ENCODE measurements at regions of chr9 and their contacts with region 1.

Region 1: DNA sequence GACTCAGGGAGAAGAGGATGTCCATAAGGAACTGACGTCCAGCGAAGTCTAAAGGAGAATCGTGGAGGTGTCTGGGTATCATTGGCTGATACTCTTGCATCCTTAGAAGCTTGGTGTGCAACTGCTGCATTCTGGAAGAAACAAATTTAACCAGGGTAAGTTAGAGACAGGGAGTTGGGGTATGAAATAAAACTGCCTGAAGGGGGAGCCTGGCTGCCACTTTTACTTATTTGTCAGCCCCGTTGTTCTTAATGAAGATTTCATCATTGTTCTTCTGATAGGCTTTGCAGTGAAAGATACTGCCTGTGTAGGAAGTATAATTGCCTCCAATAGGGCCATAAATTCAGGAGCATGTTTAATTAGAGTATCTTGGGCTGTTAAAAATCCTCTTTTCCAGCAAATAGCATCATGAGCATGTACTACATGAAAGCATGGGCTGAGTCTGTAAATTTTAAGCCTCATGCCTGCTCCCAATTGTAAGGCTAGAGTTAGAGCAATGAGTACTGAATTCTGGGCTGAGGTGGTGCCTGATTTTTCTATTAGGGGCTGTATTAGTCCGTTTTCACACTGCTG is 1264.5 kb upstream of the ACO1 start:
- DNase-seq: peak; percentile 75
- H3K4me3 Mint-ChIP-seq: no peak overlapping the region
- H3K27ac Mint-ChIP-seq: no peak overlapping the region
- H3K4me1 Mint-ChIP-seq: no peaks in the 10 kb centered on the region
- H3K27me3 Mint-ChIP-seq: no peaks in the 10 kb centered on the region

Region 2: DNA sequence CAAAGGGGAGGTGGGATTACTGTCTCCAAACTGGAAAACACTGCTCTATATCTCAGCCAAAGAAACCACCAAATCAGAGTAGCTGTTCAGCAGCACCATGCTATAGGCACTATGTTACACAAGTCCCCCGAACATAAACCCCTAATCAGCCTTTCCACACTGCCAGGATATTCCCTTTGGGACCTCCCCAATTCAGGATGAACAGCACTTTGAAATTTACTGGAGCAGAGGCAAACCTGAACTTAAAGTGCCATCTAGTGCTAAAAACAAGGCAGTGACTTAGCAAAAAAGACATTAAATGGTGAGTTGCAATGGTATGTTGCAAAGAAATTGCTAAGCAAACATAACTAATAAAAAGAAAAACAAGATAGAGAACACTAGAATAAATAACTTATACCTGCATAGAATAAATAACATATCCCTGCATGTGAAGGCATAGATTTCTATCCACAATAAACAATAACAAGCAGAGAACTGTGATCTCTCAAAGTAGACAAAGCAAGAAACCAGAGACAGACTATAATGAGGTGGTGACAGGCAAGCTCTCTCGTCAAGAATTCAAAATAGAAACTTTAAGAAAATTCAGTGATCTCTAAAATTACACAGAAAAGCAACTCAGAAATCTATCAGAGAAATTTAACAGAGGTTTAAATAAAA is 680.1 kb after region 1 on chr9:
- intact Hi-C with region 1: loop called (anchors 2 kb)
- DNase-seq: no peak
- H3K4me3 Mint-ChIP-seq: no peak overlapping the region
- H3K27ac Mint-ChIP-seq: no peak overlapping the region
- H3K4me1 Mint-ChIP-seq: no peaks in the 10 kb centered on the region
- H3K27me3 Mint-ChIP-seq: no peaks in the 10 kb centered on the region

Region 3: GRCh38 chr9:32251539-32251938 is 1131.6 kb after region 1 on chr9:
- intact Hi-C with region 1: loop called (anchors 2 kb)
- DNase-seq: peak; percentile 74
- H3K4me3 Mint-ChIP-seq: no peak overlapping the region
- H3K27ac Mint-ChIP-seq: no peak overlapping the region
- H3K4me1 Mint-ChIP-seq: no peaks in the 10 kb centered on the region
- H3K27me3 Mint-ChIP-seq: no peaks in the 10 kb centered on the region